HepG2 (cell line): ENCODE measurements at regions of chr6 and their contacts with region 1.

Region 1: GRCh38 chr6:56749632-56750151 is 107.0 kb upstream of the DST start:
- DNase-seq: peak; percentile 49
- ATAC-seq: no peak; the same call in 2 of the 3 replicates
- H3K4me3 ChIP-seq: no peak overlapping the region
- H3K27ac ChIP-seq: no peak overlapping the region
- H3K4me1 ChIP-seq: peaks cover 8% of the 10 kb centered on the region
- H3K27me3 ChIP-seq: no peaks in the 10 kb centered on the region
- CTCF ChIP-seq: no peak
- EP300 ChIP-seq: no peak
- POLR2A ChIP-seq: no peak
- RAD21 ChIP-seq: no peak

Region 2: DNA sequence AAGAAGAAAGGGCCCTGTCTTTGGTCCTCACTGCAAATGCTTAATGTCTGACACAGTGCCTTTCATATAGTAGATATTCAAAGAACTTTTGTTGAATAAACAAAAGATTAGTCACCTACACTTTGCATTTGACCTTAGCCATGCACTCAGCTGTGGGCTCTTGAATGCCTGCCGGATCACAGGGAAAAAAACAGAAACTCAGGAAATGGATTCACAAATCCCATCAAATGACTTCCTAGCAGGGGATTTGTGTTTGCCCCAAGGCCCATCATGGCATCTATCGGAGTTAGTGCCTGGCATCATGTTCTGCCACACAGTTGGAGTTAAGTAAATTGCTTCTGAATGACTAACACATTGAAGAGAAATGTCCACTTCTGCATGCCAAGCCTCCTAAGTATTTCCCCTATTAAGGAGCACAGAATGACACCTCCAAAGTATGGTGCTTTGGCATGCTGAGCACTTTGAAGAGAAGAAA is 34.7 kb before region 1 on chr6:
- CTCF ChIA-PET with region 1: no interaction called
- POLR2A ChIA-PET with region 1: interaction called, 3 read pairs
- in situ Hi-C with region 1: loop called (anchors 5 kb)
- intact Hi-C with region 1: no loop called
- DNase-seq: peak; percentile 81
- ATAC-seq: peak; percentile 94
- H3K4me3 ChIP-seq: no peak overlapping the region
- H3K27ac ChIP-seq: peak overlapping the region; percentile 31
- H3K4me1 ChIP-seq: peaks cover 47% of the 10 kb centered on the region
- H3K27me3 ChIP-seq: no peaks in the 10 kb centered on the region
- CTCF ChIP-seq: no peak
- EP300 ChIP-seq: peak in 1 of 2 experiments; percentile 74; a peak in 2 of 4 replicates
- POLR2A ChIP-seq: no peak
- RAD21 ChIP-seq: no peak